ENCODE measurements at regions of chrX and their contacts with region 1.

Region 1: DNA sequence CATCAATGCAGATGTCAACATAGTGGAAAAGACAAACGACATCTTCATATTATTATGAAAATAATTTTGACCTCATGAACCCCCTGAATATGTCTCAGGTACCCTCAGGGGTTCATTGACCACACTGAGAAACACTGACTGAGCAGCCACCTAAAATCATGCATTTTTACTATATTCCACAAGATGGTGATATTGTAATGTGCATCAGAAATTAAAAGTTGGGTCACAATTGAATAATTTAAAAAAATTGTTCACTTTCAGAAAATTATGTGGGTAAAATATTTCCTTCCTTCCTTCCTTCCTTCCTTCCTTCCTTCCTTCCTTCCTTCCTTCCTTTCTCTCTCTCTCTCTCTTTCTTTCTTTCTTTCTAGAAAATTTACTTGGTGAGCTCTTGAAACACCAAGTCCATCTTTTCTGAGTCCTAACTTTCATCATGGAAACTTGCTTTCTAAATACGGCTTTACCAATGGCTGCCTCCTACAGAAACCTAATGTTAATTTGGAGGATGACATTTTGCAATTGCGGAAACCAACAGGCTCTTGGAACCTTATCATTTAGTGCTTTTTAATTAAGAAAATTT is 103.6 kb downstream of the RTL3 start:
- DNase-seq: peak; percentile 1
- H3K4me3 ChIP-seq: no peak overlapping the region
- H3K27ac ChIP-seq: no peak overlapping the region
- H3K4me1 ChIP-seq: no peaks in the 10 kb centered on the region
- H3K27me3 ChIP-seq: no peaks in the 10 kb centered on the region
- CTCF ChIP-seq: no peak
- POLR2A ChIP-seq: no peak

Region 2: GRCh38 chrX:78708262-78708661 is 152.8 kb after region 1 on chrX:
- CTCF ChIA-PET with region 1: interaction called, 5 read pairs
- POLR2A ChIA-PET with region 1: no interaction called
- dilution Hi-C with region 1: no loop called
- intact Hi-C with region 1: loop called (anchors 1 kb)
- DNase-seq: peak; percentile 33
- H3K4me3 ChIP-seq: no peak overlapping the region
- H3K27ac ChIP-seq: no peak overlapping the region
- H3K4me1 ChIP-seq: no peaks in the 10 kb centered on the region
- H3K27me3 ChIP-seq: no peaks in the 10 kb centered on the region
- CTCF ChIP-seq: peak; percentile 24 to 40
- POLR2A ChIP-seq: no peak

Region 3: DNA sequence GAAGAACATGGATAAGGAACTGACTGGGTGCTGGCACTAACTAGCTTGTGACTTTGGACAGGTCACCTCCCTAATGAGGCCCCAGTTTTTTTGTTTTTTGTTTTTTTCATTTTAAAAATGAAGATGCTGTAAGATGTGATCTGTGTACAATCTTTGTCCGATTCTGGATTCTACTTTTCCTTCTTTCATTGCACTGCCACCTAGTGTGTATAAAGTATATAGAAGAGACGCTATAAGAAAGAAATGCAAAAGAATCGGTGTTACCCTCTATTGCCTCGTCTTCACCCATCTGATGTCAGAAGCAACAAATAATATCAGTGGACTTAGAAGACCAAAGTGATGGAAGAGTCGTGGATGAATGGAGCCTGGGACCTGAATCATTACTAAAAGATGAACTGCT is 331.1 kb after region 1 on chrX:
- CTCF ChIA-PET with region 1: interaction called, 4 read pairs
- POLR2A ChIA-PET with region 1: no interaction called
- dilution Hi-C with region 1: no loop called
- intact Hi-C with region 1: loop called (anchors 5 kb)
- DNase-seq: no peak
- H3K4me3 ChIP-seq: no peak overlapping the region
- H3K27ac ChIP-seq: no peak overlapping the region
- H3K4me1 ChIP-seq: no peaks in the 10 kb centered on the region
- H3K27me3 ChIP-seq: no peaks in the 10 kb centered on the region
- CTCF ChIP-seq: no peak
- POLR2A ChIP-seq: no peak

Region 4: GRCh38 chrX:79270401-79270800 is 714.9 kb after region 1 on chrX:
- CTCF ChIA-PET with region 1: no interaction called
- POLR2A ChIA-PET with region 1: no interaction called
- dilution Hi-C with region 1: no loop called
- intact Hi-C with region 1: loop called (anchors 2 kb)
- DNase-seq: peak; percentile 2
- H3K4me3 ChIP-seq: no peak overlapping the region
- H3K27ac ChIP-seq: no peak overlapping the region
- H3K4me1 ChIP-seq: no peaks in the 10 kb centered on the region
- H3K27me3 ChIP-seq: no peaks in the 10 kb centered on the region
- CTCF ChIP-seq: peak; percentile 6 to 15
- POLR2A ChIP-seq: no peak